Mucosa of descending colon (tissue), 3 donors: ENCODE measurements at regions of chr5 and their contacts with region 1.

Region 1: GRCh38 chr5:149141224-149141956 is at the start of gene ABLIM3:
- DNase-seq: peak; percentile 66 to 84 (median 70)
- ATAC-seq: peak; percentile 97
- H3K4me3 ChIP-seq: no peak within 1 kb of the TSS
- H3K4me1 ChIP-seq: peaks cover 4% of the 10 kb centered on the region
- CTCF ChIP-seq: peak; percentile 91
- total RNA-seq, gene ABLIM3: 4.1 to 12.4 (median 7.4) TPM

Region 2: DNA sequence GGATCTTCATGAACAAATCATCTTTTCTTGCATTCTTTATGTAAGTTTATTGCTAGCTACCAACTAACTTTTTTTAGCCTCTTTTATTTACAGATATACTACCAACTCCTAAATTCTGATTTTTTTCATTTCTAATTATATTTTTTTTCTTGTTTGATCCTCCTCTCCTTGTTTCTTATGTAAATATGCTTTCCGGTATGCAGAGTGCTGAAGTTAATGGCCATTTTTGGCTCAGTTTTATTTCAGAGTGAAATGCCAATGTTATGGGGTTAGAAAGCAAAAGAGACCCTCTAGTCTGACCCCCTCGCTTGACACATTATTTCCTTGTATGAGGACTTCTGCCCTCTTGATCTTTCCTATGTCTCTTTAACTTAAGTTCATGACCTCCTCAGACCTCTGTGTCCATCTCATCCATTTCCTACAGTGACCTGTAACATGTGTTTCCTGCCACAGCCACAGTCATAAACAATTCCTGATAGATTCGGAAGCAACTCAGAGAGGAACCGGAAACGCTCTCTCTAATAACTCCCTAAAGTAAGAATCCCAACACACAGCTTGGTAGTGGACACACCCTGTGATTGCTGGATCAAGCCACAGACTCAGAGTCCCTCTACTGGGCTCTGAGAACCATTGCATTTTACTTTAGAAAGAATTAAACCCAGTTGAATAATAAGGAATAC is 87.4 kb after region 1 on chr5:
- intact Hi-C with region 1: loop called in 1 of 2 experiments (anchors 5 kb)
- DNase-seq: peak in 1 of 3 donors; percentile 45
- ATAC-seq: peak; percentile 90
- H3K4me3 ChIP-seq: no peak overlapping the region
- H3K4me1 ChIP-seq: no peaks in the 10 kb centered on the region
- CTCF ChIP-seq: peak; percentile 44

Region 3: DNA sequence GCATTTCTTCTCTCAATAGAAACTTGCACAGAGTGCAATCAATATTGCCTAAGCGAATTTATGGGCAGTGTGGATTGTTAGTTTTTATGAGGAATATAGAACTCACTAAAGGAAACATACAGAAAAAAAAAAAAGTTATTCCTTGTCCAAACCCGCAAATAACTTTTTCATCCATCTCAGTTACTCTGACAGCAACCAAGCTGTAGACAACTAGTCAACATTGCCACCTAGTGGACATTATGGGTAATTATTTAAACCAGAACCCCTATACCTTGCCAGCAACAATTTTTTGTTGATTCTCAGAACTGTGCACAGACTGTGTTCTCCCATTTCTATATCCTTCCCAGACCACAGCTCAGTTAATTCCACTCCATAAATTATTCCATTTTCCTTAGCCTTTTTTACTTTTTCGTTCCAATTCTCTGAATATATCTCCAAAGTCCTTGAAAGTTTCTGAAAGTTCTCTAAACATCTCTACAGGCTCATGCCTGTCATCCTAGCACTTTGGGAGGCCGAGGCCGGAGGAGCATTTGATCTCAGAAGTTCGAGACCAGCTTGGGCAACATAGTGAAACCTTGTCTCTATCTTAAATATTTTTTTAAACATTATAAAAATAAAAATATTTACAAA is 127.7 kb after region 1 on chr5:
- intact Hi-C with region 1: loop called in 1 of 2 experiments (anchors 10 kb)
- DNase-seq: no peak
- ATAC-seq: no peak
- H3K4me3 ChIP-seq: no peak overlapping the region
- H3K4me1 ChIP-seq: no peaks in the 10 kb centered on the region
- CTCF ChIP-seq: peak; percentile 35